Dorsolateral prefrontal cortex (tissue), 120 donors: ENCODE measurements at regions of chr9 and their contacts with region 1.

Region 1: GRCh38 chr9:2132484-2133082 is 117.4 kb downstream of the SMARCA2 start:
- DNase-seq: no peak
- H3K4me3 ChIP-seq: no peak overlapping the region
- H3K27ac ChIP-seq: no peak overlapping the region
- H3K27me3 ChIP-seq: no peaks in the 10 kb centered on the region
- CTCF ChIP-seq: peak; percentile 53 to 82 (median 71)

Region 2: GRCh38 chr9:2662496-2662895 is 529.9 kb after region 1 on chr9:
- intact Hi-C with region 1: loop called in 1 of 2 experiments (anchors 5 kb)
- DNase-seq: peak in 9 of 10 donors; percentile 7 to 67 (median 56)
- H3K4me3 ChIP-seq: peak overlapping the region in 3 of 59 donors; percentile 6 to 42 (median 28)
- H3K27ac ChIP-seq: peak overlapping the region in 16 of 59 donors; percentile 2 to 69 (median 26)
- H3K27me3 ChIP-seq: no peaks in the 10 kb centered on the region
- CTCF ChIP-seq: peak in 52 of 56 donors; percentile 25 to 79 (median 52)

Region 3: DNA sequence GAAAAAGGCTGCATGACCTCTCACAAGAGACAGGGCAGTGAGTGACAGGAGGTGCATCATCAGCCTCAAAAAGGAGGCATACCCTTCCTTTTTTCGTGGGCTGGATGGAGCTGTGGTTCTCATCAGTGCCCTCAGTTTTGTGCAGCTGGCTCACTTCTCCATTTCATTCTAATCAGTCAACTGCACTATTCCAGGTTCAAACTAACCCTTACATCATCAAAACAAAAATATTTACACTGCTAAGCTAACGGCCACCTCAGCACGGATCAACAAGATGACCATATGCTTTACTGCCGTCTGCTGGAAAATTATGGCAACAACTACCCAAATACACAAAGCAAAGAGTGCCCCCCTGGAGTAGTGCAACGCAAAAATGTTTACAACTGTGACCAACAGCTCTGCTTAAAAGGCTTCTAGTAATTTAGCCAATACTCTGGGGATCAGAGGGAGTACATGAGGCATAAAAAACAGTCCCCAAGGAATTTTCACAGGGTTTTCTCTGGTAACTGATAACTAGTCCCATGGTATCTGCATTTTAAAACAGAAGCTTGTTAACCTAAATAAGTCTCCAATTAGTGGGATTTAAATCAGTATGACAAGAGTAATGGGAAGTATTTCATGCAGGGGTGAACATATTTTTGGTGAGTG is 595.5 kb after region 1 on chr9:
- intact Hi-C with region 1: loop called in 1 of 2 experiments (anchors 5 kb)
- DNase-seq: peak in 2 of 10 donors; percentile 20 to 41
- H3K4me3 ChIP-seq: peak overlapping the region in 1 of 59 donors; percentile 9
- H3K27ac ChIP-seq: no peak overlapping the region
- H3K27me3 ChIP-seq: no peaks in the 10 kb centered on the region
- CTCF ChIP-seq: peak in 55 of 56 donors; percentile 13 to 72 (median 53)